ENCODE measurements at regions of chr6 and their contacts with region 1.

Region 1: DNA sequence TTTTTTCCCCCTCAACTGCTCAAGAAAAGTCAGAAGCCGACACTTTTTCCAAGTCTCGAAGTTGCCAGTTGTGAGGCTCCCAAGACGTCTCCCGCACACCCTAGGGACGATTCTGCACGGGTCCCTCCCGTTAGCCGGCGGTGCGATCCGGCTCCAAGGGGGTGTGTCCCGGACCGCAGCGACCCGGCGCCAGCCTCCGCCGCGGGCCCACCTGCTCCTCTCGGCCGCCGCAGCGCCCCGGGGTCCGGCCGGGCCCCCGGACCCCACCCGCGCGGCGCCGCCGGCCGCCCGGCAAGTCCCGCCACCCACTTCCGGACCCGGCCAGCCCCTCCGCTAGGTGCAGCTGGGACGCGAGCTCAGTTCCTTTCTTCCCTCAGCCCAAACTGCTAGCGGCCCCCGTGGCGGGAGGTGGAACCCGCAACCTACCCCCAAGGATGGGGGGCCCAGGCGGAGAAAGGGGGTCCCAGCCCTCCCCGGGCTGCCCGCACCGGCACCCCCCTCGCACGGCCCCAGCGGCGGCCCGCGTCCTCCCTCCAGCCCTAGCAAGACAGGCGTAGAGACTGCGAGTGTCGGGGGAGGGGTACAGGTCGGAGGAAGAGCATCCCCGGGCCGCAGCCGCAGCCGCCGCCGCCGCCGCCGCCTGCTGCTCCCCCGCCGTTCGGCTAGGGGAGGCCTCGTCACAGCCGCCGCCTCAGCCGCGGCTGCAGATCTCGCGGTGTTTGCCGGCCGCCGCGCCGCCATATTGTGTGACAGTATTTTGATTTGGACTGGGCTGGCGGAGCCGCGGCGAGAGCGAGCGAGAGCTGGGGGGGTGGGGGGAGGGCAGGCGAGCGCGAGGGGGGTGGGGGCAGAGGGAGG is 485 bp upstream of the TAB2 start:
- DNase-seq: peak; percentile 80 to 96 (median 92)
- ATAC-seq: peak; percentile 89
- H3K4me3 ChIP-seq: peak overlapping the region; percentile 81 to 82
- H3K27ac ChIP-seq: peak overlapping the region; percentile 96 to 98
- H3K4me1 ChIP-seq: peaks cover 8 to 36% of the 10 kb centered on the region in 2 donors
- H3K27me3 ChIP-seq: no peaks in the 10 kb centered on the region
- CTCF ChIP-seq: no peak

Region 2: GRCh38 chr6:148980234-148980633 is 336.8 kb before region 1 on chr6:
- intact Hi-C with region 1: no loop called
- DNase-seq: no peak
- ATAC-seq: no peak
- H3K4me3 ChIP-seq: no peak overlapping the region
- H3K27ac ChIP-seq: no peak overlapping the region
- H3K4me1 ChIP-seq: no peaks in the 10 kb centered on the region
- H3K27me3 ChIP-seq: no peaks in the 10 kb centered on the region
- CTCF ChIP-seq: no peak

Region 3: GRCh38 chr6:149028767-149029405 is 288.1 kb before region 1 on chr6:
- intact Hi-C with region 1: no loop called
- DNase-seq: peak in 3 of 4 donors; percentile 48 to 92 (median 82)
- ATAC-seq: peak; percentile 80
- H3K4me3 ChIP-seq: no peak overlapping the region
- H3K27ac ChIP-seq: no peak overlapping the region
- H3K4me1 ChIP-seq: peaks cover 5 to 6% of the 10 kb centered on the region in 2 donors
- H3K27me3 ChIP-seq: no peaks in the 10 kb centered on the region
- CTCF ChIP-seq: peak; percentile 57 to 67

Region 4: GRCh38 chr6:149094156-149094555 is 222.9 kb before region 1 on chr6:
- intact Hi-C with region 1: no loop called
- DNase-seq: no peak
- ATAC-seq: peak; percentile 60
- H3K4me3 ChIP-seq: no peak overlapping the region
- H3K27ac ChIP-seq: no peak overlapping the region
- H3K4me1 ChIP-seq: peaks cover 0 to 9% of the 10 kb centered on the region in 2 donors
- H3K27me3 ChIP-seq: no peaks in the 10 kb centered on the region
- CTCF ChIP-seq: no peak

Region 5: DNA sequence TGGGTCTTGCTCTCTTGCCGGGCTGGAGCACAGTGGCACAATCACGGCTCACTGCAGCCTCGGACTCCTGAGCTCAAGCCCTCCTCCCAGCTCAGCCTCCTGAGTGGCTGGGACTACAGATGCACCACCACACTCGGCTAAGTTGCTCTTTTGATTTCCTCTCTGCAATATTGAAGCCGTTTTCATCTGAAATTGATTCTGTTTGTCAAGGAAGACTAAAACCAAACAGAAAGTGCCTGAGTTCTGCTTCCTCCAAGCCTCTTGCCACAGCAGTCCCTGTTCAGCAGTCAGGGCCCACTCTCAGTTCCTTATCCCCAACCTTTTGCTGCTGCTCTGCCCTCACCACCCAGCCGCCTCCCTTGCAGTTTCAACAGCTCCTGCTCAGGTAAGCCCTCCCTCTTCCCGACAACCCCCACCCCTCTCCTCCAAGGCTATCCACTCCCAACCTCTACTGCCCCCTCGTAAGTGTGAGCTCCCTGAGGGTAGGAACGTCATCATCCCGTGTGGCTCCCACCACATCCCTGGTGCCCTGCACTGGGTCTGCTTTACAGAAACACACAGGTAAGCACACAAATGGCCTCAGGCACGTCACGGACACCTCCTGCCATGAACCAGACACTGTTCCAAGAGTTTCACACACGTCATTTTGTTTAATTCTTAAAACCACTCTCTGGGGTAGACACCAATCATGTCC is 70.2 kb before region 1 on chr6:
- intact Hi-C with region 1: no loop called
- DNase-seq: peak in 1 of 4 donors; percentile 54
- ATAC-seq: peak; percentile 64
- H3K4me3 ChIP-seq: no peak overlapping the region
- H3K27ac ChIP-seq: peak overlapping the region; percentile 56 to 61
- H3K4me1 ChIP-seq: peaks cover 0 to 9% of the 10 kb centered on the region in 2 donors
- H3K27me3 ChIP-seq: no peaks in the 10 kb centered on the region
- CTCF ChIP-seq: no peak

Region 6: DNA sequence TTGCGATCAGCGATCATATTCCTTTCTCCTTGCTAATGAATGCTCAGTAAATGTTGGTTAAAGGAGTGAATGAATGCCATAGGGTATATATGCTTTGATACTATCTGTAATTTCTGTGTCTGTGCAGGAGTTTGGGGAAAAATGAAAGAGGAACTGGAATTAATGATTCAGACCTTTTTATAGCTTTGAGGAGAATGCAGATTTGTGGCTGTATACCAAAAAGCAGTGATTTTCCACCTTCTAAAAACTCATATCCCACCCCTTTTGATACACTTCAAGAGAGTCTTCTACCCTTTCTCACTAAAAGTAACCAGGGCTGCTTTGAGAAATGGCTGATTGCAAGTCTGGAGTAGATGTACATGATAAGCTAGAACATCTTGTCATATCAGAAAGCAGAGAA is 56.5 kb after region 1 on chr6:
- intact Hi-C with region 1: loop called in 1 of 2 experiments (anchors 10 kb)
- DNase-seq: no peak
- ATAC-seq: no peak
- H3K4me3 ChIP-seq: no peak overlapping the region
- H3K27ac ChIP-seq: no peak overlapping the region
- H3K4me1 ChIP-seq: peaks cover 0 to 24% of the 10 kb centered on the region in 2 donors
- H3K27me3 ChIP-seq: no peaks in the 10 kb centered on the region
- CTCF ChIP-seq: no peak